ENCODE measurements at regions of chr5 and their contacts with region 1.

Region 1: GRCh38 chr5:168513861-168514428 is 15.2 kb upstream of the FBLL1 start:
- DNase-seq: no peak
- H3K4me3 Mint-ChIP-seq: no peak overlapping the region
- H3K27ac Mint-ChIP-seq: no peak overlapping the region
- H3K4me1 Mint-ChIP-seq: no peaks in the 10 kb centered on the region
- H3K27me3 Mint-ChIP-seq: no peaks in the 10 kb centered on the region

Region 2: GRCh38 chr5:168494057-168494555 is 19.8 kb before region 1 on chr5:
- intact Hi-C with region 1: no loop called
- DNase-seq: no peak
- H3K4me3 Mint-ChIP-seq: no peak overlapping the region
- H3K27ac Mint-ChIP-seq: no peak overlapping the region
- H3K4me1 Mint-ChIP-seq: peaks cover 3% of the 10 kb centered on the region
- H3K27me3 Mint-ChIP-seq: no peaks in the 10 kb centered on the region

Region 3: GRCh38 chr5:168562279-168562678 is 48.3 kb after region 1 on chr5:
- intact Hi-C with region 1: loop called (anchors 5 kb)
- DNase-seq: no peak
- H3K4me3 Mint-ChIP-seq: no peak overlapping the region
- H3K27ac Mint-ChIP-seq: peak overlapping the region; percentile 38
- H3K4me1 Mint-ChIP-seq: peaks cover under 1% of the 10 kb centered on the region
- H3K27me3 Mint-ChIP-seq: no peaks in the 10 kb centered on the region

Region 4: DNA sequence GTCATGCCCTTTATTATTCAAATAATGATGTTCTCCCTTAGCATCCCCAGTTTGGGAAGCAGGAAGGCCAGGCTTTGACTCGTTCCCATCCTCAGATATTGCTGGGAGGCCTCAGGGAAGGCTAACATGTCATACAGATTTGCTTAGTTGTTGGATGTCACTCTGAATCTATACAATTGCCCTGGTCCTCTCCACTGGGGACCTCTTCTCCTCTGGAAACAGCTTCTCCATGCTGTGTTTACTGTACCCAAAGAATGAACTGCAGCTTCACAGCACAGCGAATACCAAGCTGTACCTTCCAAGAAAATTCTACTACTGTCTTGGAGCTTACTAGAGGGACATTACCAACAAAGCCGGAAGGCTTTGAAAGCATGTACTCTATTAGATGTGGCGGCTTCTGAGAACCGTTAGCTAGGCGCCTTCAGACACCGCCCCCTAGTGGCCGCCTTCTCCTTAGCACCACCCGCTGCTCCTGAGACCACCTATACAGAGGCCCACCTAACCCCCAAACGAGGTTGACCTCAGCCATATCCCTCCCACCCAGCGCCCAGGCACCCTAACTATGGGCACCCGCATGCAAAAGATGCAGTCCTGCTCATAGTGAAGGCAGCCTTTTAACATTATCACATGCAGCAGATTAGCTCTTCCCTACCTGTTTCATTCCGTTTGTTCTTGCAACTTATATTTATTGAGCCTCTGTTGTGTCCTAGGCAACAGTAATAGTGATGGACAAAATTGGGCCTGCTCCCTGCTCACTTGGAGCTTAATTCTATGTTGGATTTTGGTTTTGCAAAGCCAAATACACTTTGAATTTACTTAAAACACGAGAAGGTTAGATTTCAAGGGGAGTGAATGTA is 1556.8 kb after region 1 on chr5:
- intact Hi-C with region 1: loop called (anchors 5 kb)
- DNase-seq: no peak
- H3K4me3 Mint-ChIP-seq: no peak overlapping the region
- H3K27ac Mint-ChIP-seq: no peak overlapping the region
- H3K4me1 Mint-ChIP-seq: peaks cover 2% of the 10 kb centered on the region
- H3K27me3 Mint-ChIP-seq: no peaks in the 10 kb centered on the region

Measured in activated CD4-positive, alpha-beta T cell treated with anti-CD3 and anti-CD28 coated beads, Interleukin-2, amount 10 ng/mL, durations not matched to agents 24 days and 14 days (primary cell).